ENCODE measurements at regions of chr4 and their contacts with region 1.

Region 1: DNA sequence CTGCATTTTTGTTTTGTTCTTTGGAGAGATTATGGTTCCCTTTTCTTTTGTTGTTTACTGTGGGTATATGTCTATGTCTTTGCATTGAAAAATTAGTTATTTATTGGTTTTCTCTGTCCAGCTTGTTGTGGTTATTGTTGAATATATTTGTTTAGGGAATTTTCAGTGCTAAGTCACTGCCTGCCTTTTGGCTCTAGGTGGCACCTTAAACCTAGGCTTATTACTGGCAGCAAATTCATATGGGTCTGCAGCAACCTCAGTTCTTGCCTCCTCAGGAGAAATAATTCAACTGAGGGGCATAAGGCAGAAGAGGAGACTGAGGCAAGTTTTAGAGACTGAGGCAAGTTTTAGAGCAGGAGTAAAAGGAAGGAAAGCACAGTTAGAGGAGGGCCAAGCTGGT is 1157.3 kb upstream of the AGA start:
- DNase-seq: peak; percentile 32
- ATAC-seq: no peak; the same call in 1 of the 2 replicates
- H3K4me3 ChIP-seq: no peak overlapping the region
- H3K27ac ChIP-seq: no peak overlapping the region
- H3K4me1 ChIP-seq: no peaks in the 10 kb centered on the region
- H3K27me3 ChIP-seq: no peaks in the 10 kb centered on the region
- CTCF ChIP-seq: peak; percentile 62

Region 2: GRCh38 chr4:177667687-177668086 is 931.8 kb before region 1 on chr4:
- CTCF ChIA-PET with region 1: no interaction called
- POLR2A ChIA-PET with region 1: no interaction called
- intact Hi-C with region 1: loop called (anchors 10 kb)
- DNase-seq: peak; percentile 49
- ATAC-seq: peak; percentile 40; the same call in 1 of the 2 replicates
- H3K4me3 ChIP-seq: no peak overlapping the region
- H3K27ac ChIP-seq: no peak overlapping the region
- H3K4me1 ChIP-seq: no peaks in the 10 kb centered on the region
- H3K27me3 ChIP-seq: no peaks in the 10 kb centered on the region
- CTCF ChIP-seq: peak; percentile 71

Region 3: DNA sequence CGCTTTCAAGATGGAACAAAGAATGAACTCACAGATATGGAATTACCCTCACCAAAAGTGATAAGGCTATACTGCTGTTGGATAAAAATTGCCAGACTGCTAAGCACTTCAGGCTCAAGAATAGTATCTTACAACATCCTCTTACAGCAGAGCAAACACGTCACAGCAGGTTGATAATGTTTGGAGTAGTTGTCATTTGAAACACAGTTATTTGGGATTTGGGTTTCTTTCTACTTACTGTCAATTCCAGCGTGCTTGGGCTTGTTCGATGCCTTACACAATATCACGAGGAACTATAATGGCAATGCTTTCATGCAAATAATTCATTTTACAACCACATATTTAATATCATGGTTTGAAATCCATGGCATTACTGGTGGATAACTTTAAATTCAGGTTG is 66.4 kb after region 1 on chr4:
- CTCF ChIA-PET with region 1: no interaction called
- POLR2A ChIA-PET with region 1: no interaction called
- intact Hi-C with region 1: no loop called
- DNase-seq: no peak
- ATAC-seq: no peak
- H3K4me3 ChIP-seq: no peak overlapping the region
- H3K27ac ChIP-seq: no peak overlapping the region
- H3K4me1 ChIP-seq: no peaks in the 10 kb centered on the region
- H3K27me3 ChIP-seq: no peaks in the 10 kb centered on the region
- CTCF ChIP-seq: no peak

Region 4: DNA sequence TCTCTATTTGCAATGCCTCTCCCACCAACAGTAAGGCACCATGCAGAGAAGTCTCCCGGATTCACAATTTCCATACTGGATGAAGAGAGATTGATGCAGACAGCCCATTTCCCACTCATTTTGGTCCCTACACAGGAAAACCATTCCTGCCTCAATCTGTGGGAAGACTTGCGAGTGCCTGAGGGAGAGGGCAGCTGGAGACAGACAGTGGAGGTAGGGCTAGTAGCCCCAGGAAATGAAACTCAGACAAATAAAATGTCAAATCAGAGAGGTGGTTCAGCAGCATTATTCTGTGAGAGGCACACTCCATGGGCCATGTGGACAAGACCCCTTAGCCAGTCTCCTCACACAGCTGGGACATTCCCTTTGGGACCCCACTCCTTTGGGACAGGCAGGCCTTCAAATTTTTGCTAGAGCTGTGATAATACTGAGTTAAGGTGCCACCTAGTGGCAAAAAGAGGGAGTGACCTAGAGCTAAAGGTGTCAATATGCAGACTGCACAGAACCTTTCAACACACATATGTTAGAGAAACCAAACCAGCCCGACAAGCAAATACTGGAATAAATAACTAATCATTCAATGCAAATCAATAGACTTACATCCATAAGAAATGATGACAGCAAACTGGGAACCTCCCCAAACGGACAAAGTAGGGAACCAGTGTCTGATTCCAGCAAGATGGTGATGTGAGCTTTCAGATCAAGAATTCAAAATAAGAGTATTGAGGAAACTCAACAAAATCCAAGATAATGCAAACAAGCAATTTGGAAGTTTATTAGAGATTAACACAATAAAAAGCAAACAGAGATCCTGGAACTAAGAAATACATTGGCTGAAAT is 708.0 kb after region 1 on chr4:
- CTCF ChIA-PET with region 1: no interaction called
- POLR2A ChIA-PET with region 1: no interaction called
- intact Hi-C with region 1: loop called (anchors 5 kb)
- DNase-seq: peak; percentile 60
- ATAC-seq: no peak
- H3K4me3 ChIP-seq: no peak overlapping the region
- H3K27ac ChIP-seq: no peak overlapping the region
- H3K4me1 ChIP-seq: no peaks in the 10 kb centered on the region
- H3K27me3 ChIP-seq: no peaks in the 10 kb centered on the region
- CTCF ChIP-seq: peak; percentile 79

Measured in PC-3 (cell line).